ENCODE measurements at regions of chr7 and their contacts with region 1.

Region 1: GRCh38 chr7:95871078-95871782 is 98.9 kb downstream of the DYNC1I1 start:
- DNase-seq: peak; percentile 38
- ATAC-seq: peak; percentile 76
- H3K4me3 Mint-ChIP-seq: no peak overlapping the region
- H3K27ac Mint-ChIP-seq: no peak overlapping the region
- H3K4me1 Mint-ChIP-seq: peaks cover 8% of the 10 kb centered on the region
- H3K27me3 Mint-ChIP-seq: no peaks in the 10 kb centered on the region
- CTCF ChIP-seq: peak; percentile 35

Region 2: GRCh38 chr7:95690367-95690947 is 180.8 kb before region 1 on chr7:
- CTCF ChIA-PET with region 1: interaction called, 12 read pairs
- POLR2A ChIA-PET with region 1: no interaction called
- DNase-seq: no peak
- ATAC-seq: peak; percentile 64
- H3K4me3 Mint-ChIP-seq: peak overlapping the region; percentile 29
- H3K27ac Mint-ChIP-seq: no peak overlapping the region
- H3K4me1 Mint-ChIP-seq: peaks cover 6% of the 10 kb centered on the region; the same call in 1 of the 2 replicates
- H3K27me3 Mint-ChIP-seq: no peaks in the 10 kb centered on the region
- CTCF ChIP-seq: peak; percentile 60

Region 3: DNA sequence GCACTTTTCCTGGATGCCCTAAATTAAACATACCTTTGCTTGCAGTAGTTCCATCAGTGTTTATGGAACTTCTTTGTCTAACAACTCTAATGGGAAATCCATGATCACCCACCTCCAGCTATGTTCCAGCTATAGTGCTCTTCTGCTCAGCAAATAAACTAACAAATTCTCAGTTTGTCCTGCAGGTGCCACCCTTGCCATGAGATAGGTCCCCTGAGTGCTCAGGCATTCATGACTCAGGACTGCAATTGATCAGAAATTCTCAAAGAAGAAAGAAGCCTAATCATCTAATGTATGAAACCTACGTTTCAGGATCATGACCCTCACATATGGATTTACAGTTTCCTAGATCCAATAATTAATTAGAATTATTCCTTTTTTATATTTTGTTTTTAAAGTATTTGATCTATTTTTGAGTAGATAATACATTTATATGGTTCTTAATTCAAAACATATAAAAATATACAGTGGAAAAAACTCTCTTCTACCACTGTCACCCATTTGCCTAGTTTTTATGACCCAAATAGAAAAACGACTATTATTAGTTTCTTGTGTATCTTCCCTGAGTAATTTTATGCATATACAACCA is 147.5 kb before region 1 on chr7:
- CTCF ChIA-PET with region 1: interaction called, 122 read pairs
- POLR2A ChIA-PET with region 1: no interaction called
- DNase-seq: peak; percentile 60
- ATAC-seq: peak; percentile 91
- H3K4me3 Mint-ChIP-seq: no peak overlapping the region
- H3K27ac Mint-ChIP-seq: no peak overlapping the region
- H3K4me1 Mint-ChIP-seq: no peaks in the 10 kb centered on the region
- H3K27me3 Mint-ChIP-seq: no peaks in the 10 kb centered on the region
- CTCF ChIP-seq: peak; percentile 54

Region 4: GRCh38 chr7:95730493-95731280 is 140.5 kb before region 1 on chr7:
- CTCF ChIA-PET with region 1: interaction called, 122 read pairs
- POLR2A ChIA-PET with region 1: no interaction called
- DNase-seq: no peak
- ATAC-seq: no peak
- H3K4me3 Mint-ChIP-seq: no peak overlapping the region
- H3K27ac Mint-ChIP-seq: no peak overlapping the region
- H3K4me1 Mint-ChIP-seq: no peaks in the 10 kb centered on the region
- H3K27me3 Mint-ChIP-seq: no peaks in the 10 kb centered on the region
- CTCF ChIP-seq: no peak

Region 5: GRCh38 chr7:95794917-95795515 is 76.2 kb before region 1 on chr7:
- CTCF ChIA-PET with region 1: interaction called, 17 read pairs
- POLR2A ChIA-PET with region 1: no interaction called
- DNase-seq: no peak
- ATAC-seq: peak; percentile 89
- H3K4me3 Mint-ChIP-seq: no peak overlapping the region
- H3K27ac Mint-ChIP-seq: no peak overlapping the region
- H3K4me1 Mint-ChIP-seq: peaks cover 11% of the 10 kb centered on the region
- H3K27me3 Mint-ChIP-seq: peaks cover 61% of the 10 kb centered on the region
- CTCF ChIP-seq: peak; percentile 66

Region 6: DNA sequence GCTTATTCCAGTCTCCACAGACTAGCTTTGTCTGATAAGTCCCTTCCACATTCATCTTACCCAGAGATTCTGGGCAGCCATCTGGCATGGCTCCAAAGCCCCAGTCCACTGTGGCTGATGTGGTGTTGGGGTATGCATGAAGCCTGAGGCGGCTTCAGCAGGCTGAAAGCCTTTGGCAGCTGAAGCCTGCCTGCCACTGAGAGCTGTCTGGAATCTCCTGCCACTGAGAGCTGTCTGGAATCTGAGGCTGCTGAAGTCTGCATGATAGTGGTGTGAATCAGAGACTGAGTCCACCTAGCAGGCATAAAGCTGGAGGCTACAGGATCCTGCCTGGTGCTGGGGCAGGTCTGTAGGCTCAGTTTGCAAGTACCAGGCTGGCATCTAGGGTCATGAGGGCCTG is 11.8 kb before region 1 on chr7:
- CTCF ChIA-PET with region 1: interaction called, 11 read pairs
- POLR2A ChIA-PET with region 1: no interaction called
- DNase-seq: peak; percentile 17
- ATAC-seq: peak; percentile 93
- H3K4me3 Mint-ChIP-seq: no peak overlapping the region
- H3K27ac Mint-ChIP-seq: no peak overlapping the region
- H3K4me1 Mint-ChIP-seq: peaks cover 14% of the 10 kb centered on the region
- H3K27me3 Mint-ChIP-seq: no peaks in the 10 kb centered on the region
- CTCF ChIP-seq: no peak